ENCODE measurements at regions of chr9 and their contacts with region 1.

Region 1: DNA sequence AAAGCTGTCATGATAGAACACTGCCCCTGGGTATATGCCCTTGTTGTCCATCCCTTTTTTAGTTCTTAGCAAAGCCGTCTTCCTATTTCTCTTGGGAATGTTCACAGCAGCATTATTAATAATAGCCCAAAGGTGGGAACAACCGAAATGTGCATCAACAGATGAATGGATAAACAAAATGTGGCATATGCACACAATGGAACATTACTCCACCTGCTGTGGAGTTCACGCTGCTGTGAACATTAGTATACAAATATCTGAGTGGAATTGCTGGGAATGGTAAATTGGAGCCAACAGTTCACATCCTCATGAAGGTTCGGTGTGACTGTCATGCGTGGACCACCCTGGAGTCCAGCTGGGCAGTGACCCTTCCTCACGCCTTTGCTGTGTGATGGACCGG is 36.5 kb upstream of the NUTM2G start:
- DNase-seq: no peak

Region 2: GRCh38 chr9:97786341-97786740 is 894.2 kb after region 1 on chr9:
- intact Hi-C with region 1: loop called in 1 of 2 experiments (anchors 5 kb)
- DNase-seq: no peak

Measured in posterior vena cava (tissue), 2 donors.